ENCODE measurements at regions of chr9 and their contacts with region 1.

Region 1: DNA sequence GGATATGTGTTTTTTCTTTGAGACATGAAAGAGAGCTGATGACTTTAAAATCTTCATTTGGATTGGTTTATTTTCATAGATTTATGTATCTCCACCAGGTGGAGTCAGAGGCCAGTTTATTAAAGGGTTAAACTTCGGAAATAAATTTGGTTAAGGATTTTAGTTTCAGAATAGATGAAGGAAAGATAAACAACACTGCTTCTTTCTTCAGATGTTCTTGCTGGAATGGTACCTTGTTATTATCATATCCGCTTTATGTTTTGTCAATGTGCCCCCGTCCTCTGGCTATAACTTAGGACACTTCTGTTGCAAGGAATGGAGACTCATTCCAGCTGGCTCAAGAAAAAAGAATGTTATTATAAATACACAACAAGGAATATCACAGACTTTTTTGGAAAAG is 81.2 kb downstream of the ALDH1A1 start:
- DNase-seq: no peak
- H3K4me3 ChIP-seq: no peak overlapping the region
- CTCF ChIP-seq: no peak

Region 2: GRCh38 chr9:72882117-72882775 is 10.6 kb after region 1 on chr9:
- CTCF ChIA-PET with region 1: interaction called, 10 read pairs
- POLR2A ChIA-PET with region 1: no interaction called
- DNase-seq: no peak
- H3K4me3 ChIP-seq: no peak overlapping the region
- CTCF ChIP-seq: no peak

Region 3: DNA sequence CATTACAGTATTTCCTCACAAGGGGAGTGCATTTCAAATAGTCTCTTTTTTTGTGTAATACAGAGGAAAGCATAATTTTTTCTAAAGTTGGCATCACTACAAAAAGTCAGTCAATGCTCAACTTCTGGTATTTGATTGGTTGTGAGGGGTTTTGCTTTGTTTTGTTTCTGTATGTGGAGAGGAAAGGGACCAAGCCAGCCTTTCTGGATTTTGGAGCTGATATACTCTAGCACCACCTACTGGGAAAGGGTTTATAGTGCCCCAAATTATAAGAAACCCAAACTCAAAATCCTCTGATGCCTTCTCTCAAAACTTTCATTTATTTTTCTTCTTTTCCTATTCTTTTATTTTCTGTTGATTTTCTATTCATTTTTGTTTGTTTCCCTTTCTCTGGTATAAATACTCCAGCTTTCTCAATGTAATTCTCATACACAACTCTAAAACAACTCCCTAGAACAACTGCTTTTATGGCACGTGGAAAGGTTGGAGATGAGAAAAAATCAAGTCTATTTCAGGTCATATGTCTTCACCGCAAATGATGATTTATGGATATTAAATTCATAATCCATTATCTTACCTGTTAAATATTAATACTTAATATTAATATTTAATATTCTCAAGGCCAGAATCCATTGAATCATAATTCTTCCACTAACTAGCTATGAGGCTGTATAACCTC is 210.4 kb after region 1 on chr9:
- CTCF ChIA-PET with region 1: interaction called, 25 read pairs
- POLR2A ChIA-PET with region 1: no interaction called
- DNase-seq: no peak
- H3K4me3 ChIP-seq: no peak overlapping the region
- CTCF ChIP-seq: peak; percentile 66

Measured in AG04449 (cell line).